GM12878 (cell line): ENCODE measurements at regions of chr1 and their contacts with region 1.

Region 1: DNA sequence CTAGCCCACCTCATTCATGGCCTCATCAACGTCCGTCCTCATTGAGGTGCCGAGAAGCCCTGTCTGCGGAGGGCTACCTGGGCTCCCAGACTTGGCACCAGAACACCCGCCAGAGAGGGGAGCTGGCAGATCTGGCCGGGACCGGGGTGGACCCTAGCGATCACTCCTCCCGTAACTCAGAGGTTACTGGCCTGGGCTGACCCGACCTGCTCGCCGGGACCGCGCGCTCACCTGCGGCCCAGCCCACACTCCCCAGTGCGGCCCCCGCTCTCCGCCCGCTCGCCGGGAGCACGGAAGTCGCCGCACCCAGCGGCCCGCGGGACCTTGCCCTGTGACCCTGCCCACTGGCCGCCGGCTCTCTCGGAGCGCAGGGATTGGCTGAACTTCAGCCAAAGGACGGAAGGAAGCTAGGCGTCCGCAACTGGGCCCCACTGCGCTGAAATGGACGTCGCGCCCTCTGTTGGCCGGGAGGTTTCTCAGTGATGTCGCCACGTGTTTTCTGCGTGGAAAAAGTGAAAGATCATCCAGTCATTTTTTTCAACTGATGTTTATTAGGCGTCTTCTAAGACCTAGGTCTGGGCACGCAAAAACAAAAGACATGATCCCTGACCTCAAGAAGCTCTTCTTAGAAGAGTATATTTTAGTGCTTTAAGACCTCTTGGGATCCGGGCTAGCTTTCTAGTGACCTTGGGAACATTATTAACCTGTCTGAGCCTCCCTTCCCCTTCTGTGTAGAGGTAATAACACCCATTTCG is at the start of gene SMIM12:
- DNase-seq: peak; percentile 62
- ATAC-seq: peak; percentile 100
- H3K4me3 ChIP-seq: peak within 1 kb of the TSS; percentile 96
- H3K27ac ChIP-seq: peak within 1 kb of the TSS; percentile 81
- H3K4me1 ChIP-seq: no peaks in the 10 kb centered on the region
- H3K27me3 ChIP-seq: no peaks in the 10 kb centered on the region
- CTCF ChIP-seq: peak; percentile 84 to 93 (median 92)
- EP300 ChIP-seq: peak in 1 of 2 experiments; percentile 30; a peak in 1 of 4 replicates
- POLR2A ChIP-seq: peak; percentile 100
- RAD21 ChIP-seq: no peak
- polyA plus RNA-seq, gene SMIM12: 26.1 to 42.9 TPM

Region 2: DNA sequence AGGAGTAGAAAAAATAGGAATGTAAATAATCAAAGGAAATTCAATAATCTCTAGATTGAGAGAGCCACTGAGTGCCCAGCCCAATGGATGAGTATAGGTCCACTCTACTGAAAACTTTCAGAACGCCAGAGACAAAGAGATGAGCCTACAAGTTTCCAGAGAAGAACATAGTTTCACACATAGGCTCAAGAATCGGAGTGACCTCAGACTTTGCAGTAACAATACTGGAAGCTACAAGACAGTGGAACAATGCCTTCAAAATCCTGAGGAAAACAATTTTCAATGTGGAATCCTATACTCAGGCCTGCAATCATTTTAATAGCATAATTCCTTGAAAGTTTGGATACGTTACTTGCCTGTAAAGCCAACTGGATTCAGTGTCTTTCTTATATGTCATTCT is 55.9 kb before region 1 on chr1:
- CTCF ChIA-PET with region 1: no interaction called
- POLR2A ChIA-PET with region 1: no interaction called
- RAD21 ChIA-PET with region 1: no interaction called
- SMC1A ChIA-PET with region 1: no interaction called
- in situ Hi-C with region 1: no loop called
- intact Hi-C with region 1: no loop called
- DNase-seq: no peak
- ATAC-seq: no peak
- H3K4me3 ChIP-seq: no peak overlapping the region
- H3K27ac ChIP-seq: no peak overlapping the region
- H3K4me1 ChIP-seq: peaks cover 8% of the 10 kb centered on the region; the same call in 1 of the 2 replicates
- H3K27me3 ChIP-seq: no peaks in the 10 kb centered on the region
- CTCF ChIP-seq: no peak
- EP300 ChIP-seq: no peak
- POLR2A ChIP-seq: no peak
- RAD21 ChIP-seq: no peak

Region 3: GRCh38 chr1:35298464-35298863 is 438.8 kb after region 1 on chr1:
- CTCF ChIA-PET with region 1: no interaction called
- POLR2A ChIA-PET with region 1: interaction called, 4 read pairs
- RAD21 ChIA-PET with region 1: interaction called, 3 read pairs
- SMC1A ChIA-PET with region 1: no interaction called
- in situ Hi-C with region 1: no loop called
- intact Hi-C with region 1: loop called (anchors 5 kb)
- DNase-seq: peak; percentile 32
- ATAC-seq: peak; percentile 94
- H3K4me3 ChIP-seq: no peak overlapping the region; the same call in 1 of the 2 replicates
- H3K27ac ChIP-seq: peak overlapping the region; percentile 35
- H3K4me1 ChIP-seq: peaks cover 18% of the 10 kb centered on the region
- H3K27me3 ChIP-seq: no peaks in the 10 kb centered on the region
- CTCF ChIP-seq: peak; percentile 54 to 83 (median 61)
- EP300 ChIP-seq: no peak
- POLR2A ChIP-seq: no peak
- RAD21 ChIP-seq: peak; percentile 83